Activated CD4-positive, alpha-beta T cell treated with anti-CD3 and anti-CD28 coated beads for 36 hours (primary cell): ENCODE measurements at regions of chr19 and their contacts with region 1.

Region 1: DNA sequence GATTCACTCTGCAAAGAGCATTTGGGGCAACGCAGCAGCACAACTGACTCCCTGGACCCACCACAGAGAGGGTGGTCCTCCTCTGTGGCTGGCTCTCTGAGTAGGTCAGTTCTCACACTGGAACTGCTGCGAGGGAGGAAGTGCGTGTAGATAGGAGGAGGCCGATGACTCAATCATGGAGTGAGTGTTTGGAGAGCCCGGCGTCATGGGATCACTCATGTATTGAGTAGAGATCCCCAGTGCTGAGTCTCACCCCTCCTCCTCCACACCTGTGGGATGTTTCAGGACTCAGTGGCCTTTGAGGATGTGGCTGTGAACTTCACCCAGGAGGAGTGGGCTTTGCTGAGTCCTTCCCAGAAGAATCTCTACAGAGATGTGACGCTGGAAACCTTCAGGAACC is 8.9 kb downstream of the ZNF101 start:
- DNase-seq: no peak
- ATAC-seq: no peak
- H3K4me3 Mint-ChIP-seq: no peak overlapping the region
- H3K27ac Mint-ChIP-seq: peak overlapping the region; percentile 37
- H3K4me1 Mint-ChIP-seq: peaks cover 10% of the 10 kb centered on the region
- H3K27me3 Mint-ChIP-seq: no peaks in the 10 kb centered on the region

Region 2: DNA sequence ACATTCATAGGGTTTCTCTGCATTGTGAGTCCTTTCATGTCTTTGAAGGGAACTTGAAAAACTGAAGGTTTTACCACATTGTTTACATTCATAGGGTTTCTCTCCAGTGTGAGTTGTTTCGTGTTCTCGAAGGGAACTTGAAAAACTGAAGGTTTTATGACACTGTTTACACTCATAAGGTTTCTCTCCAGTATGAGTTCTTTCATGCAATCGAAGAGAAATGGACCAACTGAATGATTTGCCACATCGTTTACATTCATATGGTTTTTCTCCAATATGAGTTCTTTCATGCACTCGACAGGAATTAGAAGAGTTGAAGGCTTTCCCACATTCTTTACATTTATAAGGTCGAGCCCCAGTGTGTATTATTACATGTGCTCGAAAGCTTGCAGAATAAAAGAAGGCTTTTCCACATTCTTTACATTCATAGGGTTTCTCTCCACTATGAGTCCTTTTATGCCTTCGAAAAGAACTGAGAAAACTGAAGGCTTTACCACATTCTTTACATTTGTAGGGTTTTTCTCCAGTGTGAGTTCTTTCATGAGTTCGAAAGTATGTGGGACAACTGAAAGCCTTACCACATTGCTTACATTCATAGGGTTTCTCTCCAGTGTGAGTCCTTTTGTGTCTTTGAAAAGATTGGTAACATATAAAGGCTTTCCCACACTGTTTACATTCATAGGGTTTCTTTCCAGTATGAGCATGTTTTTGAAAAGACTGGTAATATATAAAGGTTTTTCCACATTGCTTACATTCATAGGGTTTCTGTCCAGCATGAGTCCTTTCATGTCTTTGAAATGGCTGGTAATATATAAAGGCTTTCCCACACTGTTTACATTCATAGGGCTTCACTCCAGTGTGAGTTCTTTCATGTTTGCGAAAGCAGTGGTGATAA is 34.6 kb after region 1 on chr19:
- CTCF ChIA-PET with region 1: interaction called, 3 read pairs
- POLR2A ChIA-PET with region 1: no interaction called
- intact Hi-C with region 1: loop called (anchors 5 kb)
- DNase-seq: no peak
- ATAC-seq: no peak
- H3K4me3 Mint-ChIP-seq: no peak overlapping the region
- H3K27ac Mint-ChIP-seq: no peak overlapping the region
- H3K4me1 Mint-ChIP-seq: no peaks in the 10 kb centered on the region
- H3K27me3 Mint-ChIP-seq: no peaks in the 10 kb centered on the region

Region 3: GRCh38 chr19:19719798-19720197 is 42.2 kb after region 1 on chr19:
- CTCF ChIA-PET with region 1: interaction called, 3 read pairs
- POLR2A ChIA-PET with region 1: no interaction called
- intact Hi-C with region 1: loop called (anchors 5 kb)
- DNase-seq: no peak
- ATAC-seq: no peak
- H3K4me3 Mint-ChIP-seq: no peak overlapping the region
- H3K27ac Mint-ChIP-seq: no peak overlapping the region
- H3K4me1 Mint-ChIP-seq: peaks cover 3% of the 10 kb centered on the region
- H3K27me3 Mint-ChIP-seq: no peaks in the 10 kb centered on the region

Region 4: GRCh38 chr19:19788015-19788414 is 110.4 kb after region 1 on chr19:
- CTCF ChIA-PET with region 1: no interaction called
- POLR2A ChIA-PET with region 1: no interaction called
- intact Hi-C with region 1: loop called in 1 of 2 experiments (anchors 5 kb)
- DNase-seq: no peak
- ATAC-seq: peak; percentile 51
- H3K4me3 Mint-ChIP-seq: no peak overlapping the region
- H3K27ac Mint-ChIP-seq: no peak overlapping the region
- H3K4me1 Mint-ChIP-seq: peaks cover 18% of the 10 kb centered on the region
- H3K27me3 Mint-ChIP-seq: no peaks in the 10 kb centered on the region